Breast epithelium (tissue), 4 donors: ENCODE measurements at regions of chr5 and their contacts with region 1.

Region 1: GRCh38 chr5:71482132-71482531 is 26.7 kb downstream of the BDP1 start:
- DNase-seq: peak in 1 of 2 donors; percentile 57
- H3K4me3 ChIP-seq: no peak overlapping the region
- H3K27ac ChIP-seq: peak overlapping the region in 1 of 2 donors; percentile 36
- H3K4me1 ChIP-seq: peaks cover 0 to 12% of the 10 kb centered on the region in 2 donors
- H3K27me3 ChIP-seq: no peaks in the 10 kb centered on the region
- CTCF ChIP-seq: no peak
- POLR2A ChIP-seq: no peak

Region 2: GRCh38 chr5:71734141-71734540 is 252.0 kb after region 1 on chr5:
- intact Hi-C with region 1: loop called (anchors 5 kb)
- DNase-seq: no peak
- H3K4me3 ChIP-seq: no peak overlapping the region
- H3K27ac ChIP-seq: no peak overlapping the region
- H3K4me1 ChIP-seq: no peaks in the 10 kb centered on the region
- H3K27me3 ChIP-seq: no peaks in the 10 kb centered on the region
- CTCF ChIP-seq: no peak
- POLR2A ChIP-seq: no peak